Heart left ventricle (tissue), 16 donors: ENCODE measurements at regions of chr2 and their contacts with region 1.

Region 1: DNA sequence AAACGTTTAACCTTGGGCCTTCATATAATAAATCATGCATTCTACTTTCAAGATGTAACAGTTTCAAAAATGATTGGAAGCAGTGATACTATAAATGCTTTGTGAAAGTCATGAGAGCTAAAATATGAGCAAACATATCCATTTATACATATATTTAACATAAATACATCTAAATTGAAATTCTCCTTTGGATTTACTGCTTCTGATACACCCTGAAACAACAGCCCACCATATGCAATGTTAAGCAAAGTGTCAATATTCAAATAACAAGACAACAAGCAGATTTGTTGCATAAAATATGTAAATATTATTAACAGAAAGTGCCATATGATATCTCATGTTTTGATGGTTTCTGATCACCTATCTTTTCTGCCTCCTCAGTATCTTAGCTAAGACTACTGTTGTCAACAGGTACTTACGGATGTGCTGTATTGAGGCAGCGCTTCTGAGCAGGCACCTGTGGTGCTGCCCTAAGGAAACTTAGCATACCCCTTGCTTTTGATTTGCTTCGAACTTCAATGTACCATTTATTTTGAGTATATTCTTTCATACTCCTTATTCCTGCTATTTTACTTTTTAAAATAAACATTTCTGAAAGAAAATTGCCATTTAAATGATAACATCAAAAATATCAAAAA is 6.1 kb downstream of the FIGN start:
- DNase-seq: no peak
- ATAC-seq: no peak
- H3K4me3 ChIP-seq: peak overlapping the region in 3 of 12 donors; percentile 1 to 79 (median 17)
- H3K27ac ChIP-seq: peak overlapping the region in 9 of 12 donors; percentile 16 to 96 (median 90)
- H3K4me1 ChIP-seq: peaks cover 0 to 57% (median 14%) of the 10 kb centered on the region in 12 donors
- H3K27me3 ChIP-seq: peaks cover 0 to 1% (median 0%) of the 10 kb centered on the region in 9 donors
- CTCF ChIP-seq: no peak
- POLR2A ChIP-seq: no peak

Region 2: DNA sequence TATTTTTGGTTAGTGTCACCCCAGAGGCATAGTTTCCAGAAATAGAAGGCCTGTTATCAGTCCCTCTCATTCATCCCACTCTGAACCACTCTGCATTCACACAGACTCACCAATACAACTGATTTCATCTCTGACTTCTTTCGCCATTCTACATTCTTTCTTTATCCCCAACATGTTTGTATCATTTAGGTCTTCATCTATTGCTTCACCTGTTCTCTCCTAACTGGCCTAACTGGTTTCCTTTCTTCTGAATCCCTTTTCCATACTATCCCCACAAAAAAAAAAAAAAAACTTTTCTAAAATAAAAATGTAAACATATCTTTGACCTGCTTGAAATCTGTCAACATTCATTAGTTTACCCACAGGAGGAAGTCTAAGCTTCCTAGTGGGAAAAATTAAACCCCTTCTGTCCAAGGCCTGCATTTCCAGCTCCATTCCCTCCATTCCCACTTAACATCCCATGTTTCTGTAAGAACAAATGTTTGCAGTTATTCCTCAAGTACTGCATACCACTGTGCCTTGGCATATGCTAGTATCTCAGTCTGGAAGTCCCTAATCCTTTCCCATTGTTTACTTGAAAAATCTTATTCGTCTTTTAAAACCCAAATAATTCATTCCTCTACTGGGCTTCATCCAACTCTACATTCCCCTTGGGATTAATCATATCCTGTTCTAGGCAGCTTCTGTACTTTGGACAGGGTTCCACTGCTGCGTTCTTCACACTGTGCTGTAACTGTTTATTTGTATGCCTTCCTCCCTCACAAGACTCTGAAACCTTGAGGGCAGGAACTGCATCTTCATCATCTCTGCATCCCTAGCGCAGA is 62.5 kb before region 1 on chr2:
- intact Hi-C with region 1: loop called in 4 of 10 experiments (anchors 5 to 10 kb)
- DNase-seq: peak in 3 of 5 donors; percentile 25 to 47 (median 42)
- ATAC-seq: peak; percentile 84 to 94 (median 92)
- H3K4me3 ChIP-seq: no peak overlapping the region
- H3K27ac ChIP-seq: peak overlapping the region in 11 of 12 donors; percentile 18 to 88 (median 69)
- H3K4me1 ChIP-seq: peaks cover 0 to 46% (median 15%) of the 10 kb centered on the region in 12 donors
- H3K27me3 ChIP-seq: no peaks in the 10 kb centered on the region
- CTCF ChIP-seq: no peak
- POLR2A ChIP-seq: no peak

Region 3: GRCh38 chr2:163822033-163822432 is 92.3 kb after region 1 on chr2:
- intact Hi-C with region 1: no loop called
- DNase-seq: no peak
- ATAC-seq: no peak
- H3K4me3 ChIP-seq: no peak overlapping the region
- H3K27ac ChIP-seq: no peak overlapping the region
- H3K4me1 ChIP-seq: no peaks in the 10 kb centered on the region
- H3K27me3 ChIP-seq: no peaks in the 10 kb centered on the region
- CTCF ChIP-seq: no peak
- POLR2A ChIP-seq: no peak